Colonic mucosa (tissue), 4 donors: ENCODE measurements at regions of chr9 and their contacts with region 1.

Region 1: GRCh38 chr9:115013998-115014397 is 83.6 kb upstream of the TNFSF8 start:
- DNase-seq: peak; percentile 75
- H3K4me3 ChIP-seq: no peak overlapping the region
- H3K27ac ChIP-seq: no peak overlapping the region
- H3K4me1 ChIP-seq: no peaks in the 10 kb centered on the region
- H3K27me3 ChIP-seq: no peaks in the 10 kb centered on the region
- CTCF ChIP-seq: peak; percentile 80

Region 2: DNA sequence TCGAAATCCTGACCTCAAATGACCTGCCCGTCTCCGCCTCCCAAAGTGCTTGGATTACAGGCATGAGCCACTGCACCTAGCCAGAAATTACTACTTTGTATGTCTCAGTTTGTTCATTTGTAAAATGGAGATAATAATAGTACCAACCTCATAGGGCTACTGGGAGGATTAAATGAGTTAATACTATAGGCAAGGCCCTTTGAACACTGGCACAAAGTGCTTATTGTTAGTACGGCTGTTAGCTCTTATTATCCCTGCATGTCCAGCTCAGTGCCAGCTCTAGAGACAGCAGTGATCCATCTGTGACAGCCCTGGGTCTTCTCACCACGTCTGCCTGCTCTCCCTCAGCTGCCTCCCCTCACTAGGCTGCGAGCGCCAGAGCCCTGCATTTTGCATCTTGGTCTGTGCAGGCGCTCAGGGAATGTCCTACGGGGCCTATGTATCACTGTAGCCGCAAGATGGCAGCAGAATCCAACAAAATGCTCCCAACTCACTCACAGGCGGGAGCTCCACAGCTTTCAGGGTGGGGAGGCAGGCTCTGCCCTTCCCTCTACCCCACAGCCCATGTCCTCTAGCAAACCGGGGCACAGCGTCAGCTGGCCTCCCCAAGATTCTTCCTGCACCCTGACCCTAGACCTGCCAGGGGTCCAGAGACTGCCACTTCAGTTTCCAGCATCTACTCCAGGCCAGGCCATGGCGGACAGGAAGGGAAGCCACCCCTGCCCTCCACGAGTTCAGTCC is 608.5 kb before region 1 on chr9:
- intact Hi-C with region 1: loop called (anchors 5 kb)
- DNase-seq: peak; percentile 82
- H3K4me3 ChIP-seq: no peak overlapping the region
- H3K27ac ChIP-seq: no peak overlapping the region
- H3K4me1 ChIP-seq: no peaks in the 10 kb centered on the region
- H3K27me3 ChIP-seq: no peaks in the 10 kb centered on the region
- CTCF ChIP-seq: peak; percentile 80

Region 3: DNA sequence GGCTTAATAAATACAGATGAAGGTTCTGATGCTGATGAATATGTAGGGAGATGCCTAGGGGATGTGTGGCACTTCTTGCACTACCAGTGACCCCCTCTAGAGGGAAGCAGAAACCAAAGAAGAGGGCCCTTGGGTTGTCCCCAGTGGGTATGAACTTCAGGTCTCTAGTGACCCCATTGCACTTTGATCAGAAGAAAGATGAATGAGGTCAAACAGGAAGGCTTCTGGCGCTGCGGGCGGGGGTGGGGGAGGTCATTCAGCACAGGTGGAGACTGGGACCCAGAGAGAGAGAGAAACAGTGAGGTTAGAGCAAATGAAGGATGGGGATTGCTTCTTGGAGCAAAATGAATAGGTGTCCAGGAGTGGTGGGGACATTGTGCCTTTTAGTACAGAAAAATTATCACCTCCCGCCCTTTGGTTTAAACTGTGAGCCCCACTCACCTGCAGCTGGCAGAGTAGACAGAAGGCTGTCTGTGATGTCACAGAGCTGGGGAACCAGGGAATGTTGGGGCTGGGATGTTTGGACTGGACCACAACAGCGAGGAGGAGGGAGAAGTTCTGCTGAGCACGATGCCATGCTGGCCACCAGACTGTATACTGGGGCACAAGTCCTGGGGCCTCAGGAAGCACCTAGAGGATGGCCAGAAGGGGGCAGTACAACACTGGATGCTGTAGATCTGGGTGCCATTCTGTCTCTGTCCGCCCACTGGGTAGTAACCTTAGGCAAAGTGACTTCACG is 332.2 kb before region 1 on chr9 and contains the start of gene TEX48:
- intact Hi-C with region 1: loop called (anchors 2 kb)
- DNase-seq: peak; percentile 82
- H3K4me3 ChIP-seq: no peak within 1 kb of the TSS
- H3K27ac ChIP-seq: no peak within 1 kb of the TSS
- H3K4me1 ChIP-seq: no peaks in the 10 kb centered on the region
- H3K27me3 ChIP-seq: no peaks in the 10 kb centered on the region
- CTCF ChIP-seq: peak; percentile 59
- total RNA-seq, gene TEX48: not detected

Region 4: DNA sequence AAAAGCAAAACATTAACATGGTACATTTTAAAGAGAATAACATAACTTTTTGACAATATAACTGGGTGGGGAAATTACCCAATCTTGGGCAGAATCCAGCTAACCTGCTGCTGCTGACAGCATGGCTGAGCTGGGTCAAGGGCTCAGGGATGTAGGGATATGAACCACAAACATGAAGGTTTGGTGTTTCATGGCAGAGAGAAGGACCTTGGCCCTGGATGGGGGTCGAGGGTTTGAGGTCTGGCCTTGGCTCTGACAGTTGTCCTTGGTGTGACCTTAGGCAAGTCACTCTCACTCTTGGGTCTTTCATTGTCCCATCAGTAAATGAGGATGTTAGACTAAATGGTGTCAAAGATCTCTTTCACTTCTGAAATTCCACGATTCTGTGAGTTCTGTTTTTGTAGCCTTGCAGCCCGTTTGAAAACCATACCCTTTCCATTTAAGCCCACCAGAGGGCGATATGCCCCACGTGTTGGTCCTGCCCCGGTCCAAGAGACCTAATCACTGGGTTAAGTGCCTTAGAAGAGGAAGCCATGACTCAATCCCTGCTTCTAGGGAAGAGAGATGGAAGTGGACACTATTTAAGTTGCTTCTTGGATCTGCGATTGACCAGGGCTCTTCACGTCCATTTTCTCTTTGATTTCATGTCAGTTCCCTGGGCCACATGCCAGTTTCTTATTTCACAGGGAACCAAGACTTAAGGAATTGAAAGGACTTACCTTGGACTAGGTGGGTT is 275.2 kb before region 1 on chr9:
- intact Hi-C with region 1: loop called (anchors 2 kb)
- DNase-seq: peak; percentile 81
- H3K4me3 ChIP-seq: no peak overlapping the region
- H3K27ac ChIP-seq: no peak overlapping the region
- H3K4me1 ChIP-seq: no peaks in the 10 kb centered on the region
- H3K27me3 ChIP-seq: no peaks in the 10 kb centered on the region
- CTCF ChIP-seq: peak; percentile 86

Region 5: GRCh38 chr9:114906908-114907571 is 107.0 kb before region 1 on chr9:
- intact Hi-C with region 1: loop called (anchors 5 kb)
- DNase-seq: no peak
- H3K4me3 ChIP-seq: no peak overlapping the region
- H3K27ac ChIP-seq: peak overlapping the region; percentile 18
- H3K4me1 ChIP-seq: peaks cover 6% of the 10 kb centered on the region
- H3K27me3 ChIP-seq: no peaks in the 10 kb centered on the region
- CTCF ChIP-seq: peak; percentile 37

Region 6: GRCh38 chr9:115341426-115341825 is 327.4 kb after region 1 on chr9:
- intact Hi-C with region 1: no loop called
- DNase-seq: no peak
- H3K4me3 ChIP-seq: no peak overlapping the region
- H3K27ac ChIP-seq: no peak overlapping the region
- H3K4me1 ChIP-seq: no peaks in the 10 kb centered on the region
- H3K27me3 ChIP-seq: no peaks in the 10 kb centered on the region
- CTCF ChIP-seq: no peak

Region 7: GRCh38 chr9:115507148-115507547 is 493.1 kb after region 1 on chr9:
- intact Hi-C with region 1: no loop called
- DNase-seq: no peak
- H3K4me3 ChIP-seq: no peak overlapping the region
- H3K27ac ChIP-seq: no peak overlapping the region
- H3K4me1 ChIP-seq: no peaks in the 10 kb centered on the region
- H3K27me3 ChIP-seq: no peaks in the 10 kb centered on the region
- CTCF ChIP-seq: no peak

Region 8: GRCh38 chr9:115524453-115525059 is 510.6 kb after region 1 on chr9:
- intact Hi-C with region 1: loop called (anchors 10 kb)
- DNase-seq: peak; percentile 40
- H3K4me3 ChIP-seq: no peak overlapping the region
- H3K27ac ChIP-seq: no peak overlapping the region
- H3K4me1 ChIP-seq: no peaks in the 10 kb centered on the region
- H3K27me3 ChIP-seq: no peaks in the 10 kb centered on the region
- CTCF ChIP-seq: peak; percentile 47